ENCODE measurements at regions of chr3 and their contacts with region 1.

Region 1: GRCh38 chr3:47282424-47283192 is at the starts of genes KIF9 and KLHL18:
- DNase-seq: peak; percentile 97
- H3K4me3 ChIP-seq: peak within 1 kb of the TSS; percentile 73 to 91 (median 85)
- H3K27ac ChIP-seq: peak within 1 kb of the TSS; percentile 85 to 96 (median 90)
- H3K4me1 ChIP-seq: peaks cover 0 to 46% (median 44%) of the 10 kb centered on the region in 4 donors
- H3K27me3 ChIP-seq: no peaks in the 10 kb centered on the region
- CTCF ChIP-seq: no peak
- EP300 ChIP-seq: peak in 2 of 4 donors; percentile 39 to 60
- POLR2A ChIP-seq: peak in 1 of 2 donors; percentile 60
- total RNA-seq, gene KIF9: 5.3 to 16.1 (median 9.0) TPM
- total RNA-seq, gene KLHL18: 10.3 to 33.8 (median 11.7) TPM

Region 2: DNA sequence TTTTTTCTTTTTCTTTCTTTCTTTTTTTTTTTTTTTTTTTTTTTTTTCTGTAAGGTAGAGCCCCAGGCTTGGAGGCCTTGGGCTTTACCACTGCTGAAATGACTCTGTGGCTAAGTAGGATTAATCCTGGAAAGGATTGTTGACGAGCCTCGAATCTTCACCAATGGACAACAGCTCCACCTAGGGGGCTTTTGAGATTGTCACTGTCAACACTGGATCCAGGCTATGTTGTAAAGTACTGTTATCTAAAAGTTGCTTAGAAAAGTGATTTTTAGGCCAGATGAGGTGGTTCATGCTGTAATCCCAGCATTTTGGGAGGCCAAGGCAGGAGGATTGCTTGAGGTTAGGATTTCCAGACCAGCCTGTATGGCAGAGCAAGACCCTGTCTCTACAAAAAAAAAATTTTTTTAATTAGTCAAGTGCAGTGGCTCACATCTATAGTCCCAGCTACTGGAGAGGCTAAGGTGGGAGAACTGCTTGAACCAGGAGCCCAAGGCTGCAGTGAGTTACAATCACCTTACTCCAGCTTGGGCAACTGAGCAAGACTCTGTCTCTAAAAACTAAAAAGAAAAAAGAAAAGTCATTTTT is 41.8 kb after region 1 on chr3:
- intact Hi-C with region 1: loop called (anchors 5 kb)
- DNase-seq: peak; percentile 74
- H3K4me3 ChIP-seq: no peak overlapping the region
- H3K27ac ChIP-seq: no peak overlapping the region
- H3K4me1 ChIP-seq: peaks cover 0 to 4% (median 2%) of the 10 kb centered on the region in 4 donors
- H3K27me3 ChIP-seq: no peaks in the 10 kb centered on the region
- CTCF ChIP-seq: peak in 3 of 4 experiments; percentile 53 to 69 (median 54)
- EP300 ChIP-seq: no peak
- POLR2A ChIP-seq: no peak

Region 3: DNA sequence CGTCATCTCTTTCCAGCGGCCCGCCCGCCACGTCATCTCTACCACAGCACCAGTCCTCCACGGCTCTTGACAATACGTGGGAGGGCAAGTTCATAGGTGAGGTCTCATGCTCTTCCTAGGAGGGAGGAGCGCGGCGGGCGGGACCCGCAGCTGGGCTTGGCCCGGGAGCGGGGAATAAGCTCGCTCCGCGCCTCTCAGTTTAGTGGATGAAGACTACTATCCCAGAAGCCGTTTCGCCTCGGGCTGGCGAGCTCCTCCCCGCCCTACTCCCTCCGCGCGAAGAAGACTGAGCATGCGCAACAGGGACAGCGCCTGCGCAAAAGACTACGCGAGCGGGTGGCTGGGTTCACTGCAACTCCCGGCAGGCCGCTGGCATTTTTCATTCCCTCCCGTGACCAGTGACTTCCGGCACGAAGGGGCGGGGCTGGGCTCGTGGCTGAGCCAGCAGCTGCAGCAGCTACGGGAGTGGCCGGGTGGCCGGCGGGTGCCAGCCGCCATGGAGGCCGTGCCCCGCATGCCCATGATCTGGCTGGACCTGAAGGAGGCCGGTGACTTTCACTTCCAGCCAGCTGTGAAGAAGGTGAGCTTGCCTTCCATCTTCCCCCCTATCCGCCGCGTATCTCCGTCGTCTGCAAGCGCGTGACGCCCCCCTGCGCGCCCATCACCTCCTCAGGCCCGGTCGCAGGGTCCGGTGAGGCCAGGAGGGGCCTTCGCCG is 98.2 kb after region 1 on chr3 and contains the start of gene PTPN23:
- intact Hi-C with region 1: loop called (anchors 2 kb)
- DNase-seq: peak; percentile 100
- H3K4me3 ChIP-seq: peak within 1 kb of the TSS; percentile 86 to 99 (median 96)
- H3K27ac ChIP-seq: peak within 1 kb of the TSS; percentile 96 to 99 (median 98)
- H3K4me1 ChIP-seq: peaks cover 0 to 48% (median 30%) of the 10 kb centered on the region in 4 donors
- H3K27me3 ChIP-seq: no peaks in the 10 kb centered on the region
- CTCF ChIP-seq: no peak
- EP300 ChIP-seq: peak in 2 of 4 donors; percentile 41 to 88
- POLR2A ChIP-seq: peak; percentile 84 to 85
- total RNA-seq, gene PTPN23: 11.0 to 26.9 (median 14.7) TPM

Measured in sigmoid colon (tissue), 7 donors.